Esophagus squamous epithelium (tissue), 5 donors: ENCODE measurements at regions of chr21 and their contacts with region 1.

Region 1: GRCh38 chr21:38505654-38506515 is 7.6 kb upstream of the ERG start:
- DNase-seq: no peak
- H3K4me3 ChIP-seq: peak overlapping the region in 2 of 4 donors; percentile 6 to 49
- H3K27ac ChIP-seq: peak overlapping the region in 2 of 4 donors; percentile 48 to 51
- H3K4me1 ChIP-seq: peaks cover 0 to 17% (median 0%) of the 10 kb centered on the region in 3 donors
- H3K27me3 ChIP-seq: no peaks in the 10 kb centered on the region
- CTCF ChIP-seq: peak in 5 of 6 experiments; percentile 52 to 74 (median 55)
- POLR2A ChIP-seq: no peak

Region 2: DNA sequence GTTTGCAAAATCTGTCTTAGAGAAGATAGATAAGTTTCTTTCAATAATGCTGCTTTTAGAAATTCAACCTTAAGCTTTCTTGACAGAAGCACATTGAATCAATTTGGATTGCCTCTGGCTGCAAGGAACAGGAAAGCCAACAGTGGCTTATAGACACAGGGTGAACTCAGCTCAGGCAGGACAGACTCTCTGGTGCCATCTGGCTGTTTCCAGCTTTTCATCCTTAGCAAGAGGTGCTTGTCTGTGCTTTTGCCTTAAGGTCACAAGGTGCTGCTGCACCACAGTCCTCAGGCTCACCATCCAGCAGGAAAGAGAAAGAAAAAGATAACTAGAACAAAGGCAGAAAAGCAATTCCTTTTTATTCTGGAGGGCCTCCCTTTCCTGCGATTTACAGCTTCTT is 206.2 kb after region 1 on chr21:
- intact Hi-C with region 1: loop called (anchors 10 kb)
- DNase-seq: no peak
- H3K4me3 ChIP-seq: no peak overlapping the region
- H3K27ac ChIP-seq: no peak overlapping the region
- H3K4me1 ChIP-seq: no peaks in the 10 kb centered on the region
- H3K27me3 ChIP-seq: no peaks in the 10 kb centered on the region
- CTCF ChIP-seq: peak; percentile 9 to 64 (median 44)
- POLR2A ChIP-seq: no peak

Region 3: DNA sequence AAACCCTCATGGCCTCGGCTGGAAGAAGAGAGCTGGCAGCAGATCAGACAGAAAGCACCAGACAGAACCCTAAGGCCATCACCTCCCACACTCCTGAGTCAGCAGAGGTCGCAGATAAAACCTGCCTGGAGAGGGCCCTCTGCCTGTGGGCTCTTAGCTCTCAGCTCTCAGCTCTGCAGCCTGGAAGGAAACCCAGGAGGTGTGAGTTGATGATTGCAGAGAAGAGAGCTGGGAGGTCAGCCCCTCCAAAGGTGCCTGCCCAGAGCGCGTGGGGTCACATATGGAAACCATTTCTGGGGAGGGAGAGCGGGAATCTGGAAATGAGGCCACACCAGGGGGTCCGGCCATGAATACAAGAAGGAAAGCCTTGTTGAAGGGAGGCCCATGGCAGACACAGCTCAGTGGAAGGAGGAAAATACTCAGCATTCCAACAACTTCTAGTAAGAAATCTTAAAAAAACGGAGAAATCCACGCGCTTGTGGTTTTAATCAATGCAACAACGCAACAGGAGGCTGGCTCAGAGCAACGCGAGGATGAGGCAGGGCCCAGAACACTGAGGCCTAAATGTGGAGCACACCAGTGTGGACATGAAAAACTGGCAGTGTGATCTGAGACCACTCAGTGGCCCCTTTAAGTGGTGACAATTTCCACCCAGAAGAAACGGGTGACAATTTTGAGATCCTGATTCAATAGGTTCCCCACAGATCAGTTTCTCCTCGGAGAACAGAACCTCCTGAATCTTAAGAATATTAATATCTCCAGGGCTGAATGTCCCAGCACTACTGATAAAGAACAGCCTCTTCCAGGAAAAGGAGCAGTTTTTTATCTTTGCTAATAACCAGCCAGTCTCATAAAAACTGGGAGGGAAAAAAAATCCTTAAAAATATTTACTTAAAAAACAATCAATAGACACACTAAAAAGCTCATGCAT is 631.6 kb after region 1 on chr21:
- intact Hi-C with region 1: loop called (anchors 10 kb)
- DNase-seq: no peak
- H3K4me3 ChIP-seq: no peak overlapping the region
- H3K27ac ChIP-seq: peak overlapping the region in 3 of 4 donors; percentile 1 to 45 (median 38)
- H3K4me1 ChIP-seq: peaks cover 0 to 25% (median 11%) of the 10 kb centered on the region in 3 donors
- H3K27me3 ChIP-seq: no peaks in the 10 kb centered on the region
- CTCF ChIP-seq: no peak
- POLR2A ChIP-seq: no peak